Caco-2 (cell line): ENCODE measurements at regions of chr14 and their contacts with region 1.

Region 1: GRCh38 chr14:59918824-59919569 is 947 bp upstream of the LRRC9 start:
- DNase-seq: peak; percentile 23 to 38
- H3K4me3 ChIP-seq: peak overlapping the region; percentile 45
- H3K4me3 Mint-ChIP-seq: peak overlapping the region; percentile 85
- H3K27ac Mint-ChIP-seq: peak overlapping the region; percentile 98
- H3K4me1 ChIP-seq: peaks cover 10% of the 10 kb centered on the region
- H3K4me1 Mint-ChIP-seq: peaks cover 5% of the 10 kb centered on the region
- H3K27me3 ChIP-seq: no peaks in the 10 kb centered on the region
- H3K27me3 Mint-ChIP-seq: no peaks in the 10 kb centered on the region
- CTCF ChIP-seq: peak; percentile 34 to 50

Region 2: DNA sequence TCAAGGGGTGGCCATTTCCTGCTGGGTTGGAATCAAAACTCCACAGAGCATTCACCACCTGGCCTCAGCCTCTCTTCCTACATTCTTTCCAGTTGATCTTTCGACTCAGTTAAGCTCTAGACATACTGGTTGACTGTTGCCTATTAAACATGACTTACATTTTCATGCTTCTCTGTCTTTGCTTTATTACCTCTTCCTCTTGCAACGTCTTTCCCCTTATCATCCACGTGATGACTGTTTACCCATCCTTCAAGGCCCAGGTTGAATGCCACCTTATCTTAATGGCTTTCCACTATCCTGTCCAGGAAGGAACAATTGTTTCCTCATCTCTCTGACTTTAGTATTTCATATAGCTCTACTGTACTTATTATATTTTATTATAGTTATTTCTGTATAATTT is 317.9 kb before region 1 on chr14:
- CTCF ChIA-PET with region 1: no interaction called
- POLR2A ChIA-PET with region 1: no interaction called
- intact Hi-C with region 1: loop called (anchors 1 kb)
- DNase-seq: peak; percentile 52 to 73
- H3K4me3 ChIP-seq: no peak overlapping the region
- H3K4me3 Mint-ChIP-seq: peak overlapping the region; percentile 35
- H3K27ac Mint-ChIP-seq: peak overlapping the region; percentile 85
- H3K4me1 ChIP-seq: peaks cover 17% of the 10 kb centered on the region
- H3K4me1 Mint-ChIP-seq: peaks cover 10% of the 10 kb centered on the region
- H3K27me3 ChIP-seq: no peaks in the 10 kb centered on the region
- H3K27me3 Mint-ChIP-seq: no peaks in the 10 kb centered on the region
- CTCF ChIP-seq: no peak

Region 3: GRCh38 chr14:59632381-59632780 is 286.6 kb before region 1 on chr14:
- CTCF ChIA-PET with region 1: no interaction called
- POLR2A ChIA-PET with region 1: no interaction called
- intact Hi-C with region 1: loop called (anchors 1 kb)
- DNase-seq: peak in 1 of 2 experiments; percentile 24
- H3K4me3 ChIP-seq: no peak overlapping the region
- H3K4me3 Mint-ChIP-seq: no peak overlapping the region
- H3K27ac Mint-ChIP-seq: no peak overlapping the region
- H3K4me1 ChIP-seq: 0 out of 2 replicates have a peak, but pooled peaks cover 3% of the 10 kb centered on the region
- H3K4me1 Mint-ChIP-seq: no peaks in the 10 kb centered on the region
- H3K27me3 ChIP-seq: no peaks in the 10 kb centered on the region
- H3K27me3 Mint-ChIP-seq: peaks cover 15% of the 10 kb centered on the region
- CTCF ChIP-seq: peak; percentile 25 to 39

Region 4: GRCh38 chr14:59819446-59820088 is 99.4 kb before region 1 on chr14:
- CTCF ChIA-PET with region 1: no interaction called
- POLR2A ChIA-PET with region 1: no interaction called
- intact Hi-C with region 1: no loop called
- DNase-seq: no peak
- H3K4me3 ChIP-seq: no peak overlapping the region
- H3K4me3 Mint-ChIP-seq: no peak overlapping the region
- H3K27ac Mint-ChIP-seq: no peak overlapping the region
- H3K4me1 ChIP-seq: no peaks in the 10 kb centered on the region
- H3K4me1 Mint-ChIP-seq: no peaks in the 10 kb centered on the region
- H3K27me3 ChIP-seq: no peaks in the 10 kb centered on the region
- H3K27me3 Mint-ChIP-seq: peaks cover 8% of the 10 kb centered on the region
- CTCF ChIP-seq: no peak